OCI-LY7 (cell line): ENCODE measurements at regions of chr20 and their contacts with region 1.

Region 1: DNA sequence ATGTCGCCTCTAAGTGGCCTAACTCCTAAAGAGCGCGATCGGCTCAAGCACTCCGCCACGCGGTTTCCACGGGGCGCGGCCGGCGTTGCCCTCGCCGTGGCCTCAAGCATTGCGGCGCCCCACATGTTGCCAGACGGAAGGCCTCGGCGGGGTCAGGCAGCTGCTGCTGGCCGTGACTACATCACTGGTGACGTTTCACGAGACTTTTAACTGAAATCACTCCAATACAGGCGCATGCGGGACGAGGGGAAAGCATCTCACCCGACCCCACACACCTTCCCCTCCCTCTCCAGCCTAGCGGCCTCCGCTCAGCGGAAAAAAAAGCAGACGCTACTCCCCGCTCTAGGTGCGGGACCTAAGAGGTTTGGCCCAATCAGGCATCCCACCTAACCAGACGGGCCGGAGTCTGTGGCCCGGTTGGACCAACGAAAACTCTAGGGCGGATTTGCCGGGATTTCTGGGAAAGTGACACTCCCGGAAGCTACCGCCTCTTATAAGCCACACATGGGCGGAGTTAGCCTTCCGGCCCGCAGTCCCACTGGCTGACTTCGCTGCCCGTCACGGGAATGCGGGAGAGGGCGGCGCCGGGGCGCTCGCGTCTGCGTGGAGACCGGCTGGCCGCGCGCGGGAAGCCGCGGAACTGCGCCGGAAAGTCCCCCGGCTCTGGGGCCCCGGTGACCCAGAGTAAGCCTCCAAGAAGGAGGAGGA is at the start of gene NXT1:
- DNase-seq: peak; percentile 97
- H3K4me3 ChIP-seq: peak within 1 kb of the TSS; percentile 97
- H3K27ac ChIP-seq: peak within 1 kb of the TSS; percentile 92
- H3K4me1 ChIP-seq: peaks cover 22% of the 10 kb centered on the region
- CTCF ChIP-seq: no peak
- total RNA-seq, gene NXT1: 71.6 and 76.5 TPM in 2 replicates

Region 2: DNA sequence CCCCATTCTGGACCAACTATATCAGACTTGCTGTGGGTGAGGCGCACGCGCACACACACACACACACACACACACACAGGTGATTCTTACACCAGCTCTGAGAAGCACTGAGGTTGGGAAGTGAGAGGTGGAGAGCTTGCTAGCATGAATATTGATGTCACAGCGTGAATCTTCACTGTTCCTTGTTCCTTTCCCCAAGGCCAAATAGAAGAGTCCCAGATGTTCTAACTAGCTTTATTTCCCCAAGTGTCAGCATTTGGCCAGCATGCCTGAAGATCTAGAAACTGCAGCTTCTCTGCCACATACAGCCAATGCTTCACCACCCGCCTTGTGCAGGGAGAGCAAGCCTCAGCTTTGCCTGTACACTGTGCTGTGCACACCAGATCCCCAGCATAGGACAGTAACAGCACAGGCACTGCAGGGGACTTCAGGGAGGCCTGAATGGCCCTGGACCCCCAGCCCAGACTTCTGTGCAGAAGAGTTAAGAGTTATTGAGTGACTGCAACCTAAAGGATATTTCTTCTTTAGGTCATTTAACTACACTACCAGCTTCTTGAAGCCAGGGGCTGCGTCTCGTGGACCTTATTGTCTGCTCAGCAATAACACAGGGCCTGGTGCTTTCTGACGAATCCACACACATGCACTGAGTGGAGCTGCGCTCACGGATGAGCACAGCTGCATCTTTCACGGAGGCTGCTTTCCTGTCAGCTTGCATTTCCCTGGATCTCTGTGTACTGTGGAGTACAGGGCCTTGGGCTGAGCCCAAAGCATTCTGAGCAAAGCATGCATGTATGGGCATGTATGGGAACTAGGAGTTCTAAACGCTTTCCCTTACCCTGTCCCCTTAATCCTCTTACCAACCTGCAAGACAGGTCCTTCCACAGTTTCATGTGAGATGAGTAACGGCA is 250.3 kb before region 1 on chr20:
- CTCF ChIA-PET with region 1: no interaction called
- POLR2A ChIA-PET with region 1: no interaction called
- intact Hi-C with region 1: no loop called
- DNase-seq: no peak
- H3K4me3 ChIP-seq: no peak overlapping the region
- H3K27ac ChIP-seq: no peak overlapping the region
- H3K4me1 ChIP-seq: no peaks in the 10 kb centered on the region
- CTCF ChIP-seq: no peak

Region 3: GRCh38 chr20:23257848-23258746 is 92.3 kb before region 1 on chr20:
- CTCF ChIA-PET with region 1: no interaction called
- POLR2A ChIA-PET with region 1: no interaction called
- intact Hi-C with region 1: no loop called
- DNase-seq: no peak
- H3K4me3 ChIP-seq: no peak overlapping the region
- H3K27ac ChIP-seq: no peak overlapping the region
- H3K4me1 ChIP-seq: no peaks in the 10 kb centered on the region
- CTCF ChIP-seq: no peak

Region 4: DNA sequence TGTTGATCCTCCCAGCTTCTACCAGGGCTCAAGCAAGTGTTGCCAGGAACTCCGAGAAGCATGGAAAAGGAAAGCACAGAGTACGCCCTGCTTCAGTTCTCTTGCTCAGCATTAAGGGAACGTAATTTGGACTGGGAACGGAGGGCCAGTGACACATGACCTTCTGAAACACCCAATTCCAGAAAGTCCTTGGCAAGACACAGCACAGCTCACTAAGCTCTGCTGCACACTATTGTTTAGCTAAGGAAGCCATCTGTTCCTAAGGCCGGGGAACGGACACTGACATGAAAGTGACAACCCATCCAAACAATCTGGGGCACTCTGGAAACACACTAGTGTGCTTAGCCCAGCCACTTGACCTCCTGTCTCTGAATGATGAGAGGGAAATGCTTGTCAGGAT is 56.7 kb before region 1 on chr20:
- CTCF ChIA-PET with region 1: no interaction called
- POLR2A ChIA-PET with region 1: no interaction called
- intact Hi-C with region 1: no loop called
- DNase-seq: no peak
- H3K4me3 ChIP-seq: no peak overlapping the region
- H3K27ac ChIP-seq: no peak overlapping the region
- H3K4me1 ChIP-seq: no peaks in the 10 kb centered on the region
- CTCF ChIP-seq: no peak

Region 5: GRCh38 chr20:23391707-23392310 is 41.5 kb after region 1 on chr20:
- CTCF ChIA-PET with region 1: interaction called, 10 read pairs
- POLR2A ChIA-PET with region 1: interaction called, 4 read pairs
- intact Hi-C with region 1: no loop called
- DNase-seq: peak; percentile 57
- H3K4me3 ChIP-seq: peak overlapping the region; percentile 13
- H3K27ac ChIP-seq: peak overlapping the region; percentile 62
- H3K4me1 ChIP-seq: peaks cover 32% of the 10 kb centered on the region
- CTCF ChIP-seq: no peak

Region 6: GRCh38 chr20:23420943-23421931 is 70.9 kb after region 1 on chr20 and contains the start of gene NAPB:
- CTCF ChIA-PET with region 1: interaction called, 5 read pairs
- POLR2A ChIA-PET with region 1: interaction called, 8 read pairs
- intact Hi-C with region 1: loop called (anchors 1 kb)
- DNase-seq: peak; percentile 96
- H3K4me3 ChIP-seq: peak within 1 kb of the TSS; percentile 100
- H3K27ac ChIP-seq: peak within 1 kb of the TSS; percentile 34
- H3K4me1 ChIP-seq: peaks cover 19% of the 10 kb centered on the region
- CTCF ChIP-seq: peak; percentile 49; the same call in 1 of the 2 replicates
- total RNA-seq, gene NAPB: 9.3 and 12.5 TPM in 2 replicates

Region 7: GRCh38 chr20:23520185-23520584 is 169.8 kb after region 1 on chr20:
- CTCF ChIA-PET with region 1: no interaction called
- POLR2A ChIA-PET with region 1: no interaction called
- intact Hi-C with region 1: no loop called
- DNase-seq: no peak
- H3K4me3 ChIP-seq: no peak overlapping the region
- H3K27ac ChIP-seq: no peak overlapping the region
- H3K4me1 ChIP-seq: no peaks in the 10 kb centered on the region
- CTCF ChIP-seq: no peak